ENCODE measurements at regions of chr19 and their contacts with region 1.

Region 1: DNA sequence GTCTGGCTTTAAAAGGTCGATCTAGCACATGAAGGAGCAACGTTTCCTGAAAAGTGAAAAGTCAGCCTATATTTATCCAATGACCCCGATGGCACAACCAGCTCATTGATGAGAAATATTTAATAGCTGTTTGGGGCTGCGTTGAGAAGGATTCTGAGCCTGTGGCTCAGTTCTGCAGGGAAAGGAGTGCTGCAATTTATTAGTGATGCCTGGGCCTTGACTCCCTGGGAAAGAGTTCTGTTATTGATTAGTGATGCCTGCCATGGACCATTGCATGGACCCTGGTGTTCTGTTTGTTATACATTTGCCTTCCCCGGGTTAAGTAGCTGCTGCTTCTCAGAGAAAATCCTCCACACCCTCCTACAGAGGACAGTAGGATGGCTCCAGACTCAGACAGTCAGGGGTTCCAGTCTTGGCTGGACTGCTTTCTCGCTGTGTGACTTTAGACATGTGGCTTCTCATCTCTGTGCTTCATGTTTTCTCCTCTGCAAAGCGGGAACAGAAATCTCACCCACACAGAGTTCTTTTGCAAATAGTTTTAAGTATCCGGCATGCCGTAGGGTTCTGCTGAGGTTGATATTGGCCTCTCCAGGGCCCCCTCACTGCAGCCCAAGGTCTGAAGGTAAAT is 17.7 kb upstream of the PTPRS start:
- DNase-seq: no peak
- H3K4me3 Mint-ChIP-seq: no peak overlapping the region
- H3K27ac Mint-ChIP-seq: no peak overlapping the region
- H3K4me1 Mint-ChIP-seq: no peaks in the 10 kb centered on the region
- H3K27me3 Mint-ChIP-seq: peaks cover 66% of the 10 kb centered on the region
- CTCF ChIP-seq: no peak

Region 2: DNA sequence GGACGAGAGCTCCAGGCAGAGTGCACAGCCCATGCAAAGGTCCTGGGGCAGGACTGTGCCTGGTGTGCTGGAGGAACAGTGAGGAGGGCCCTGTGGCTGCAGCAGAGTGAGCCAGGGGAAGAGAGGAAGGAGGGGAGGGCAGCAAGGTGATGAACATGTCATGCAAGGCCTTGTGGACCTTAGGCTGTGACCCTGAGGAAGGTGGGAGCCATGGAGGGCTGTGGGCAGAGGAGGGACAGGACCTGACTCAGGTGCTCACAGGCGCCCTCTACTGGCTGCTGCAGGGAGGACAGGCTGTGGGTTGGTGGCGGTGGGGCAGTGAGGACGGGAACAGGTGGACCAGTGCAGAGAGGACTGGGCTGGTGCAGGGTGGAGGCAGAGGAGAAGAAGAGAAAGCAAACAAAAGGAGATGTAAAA is 187.9 kb before region 1 on chr19:
- CTCF ChIA-PET with region 1: interaction called, 10 read pairs
- intact Hi-C with region 1: no loop called
- DNase-seq: peak; percentile 26
- H3K4me3 Mint-ChIP-seq: peak overlapping the region; percentile 4
- H3K27ac Mint-ChIP-seq: peak overlapping the region; percentile 16
- H3K4me1 Mint-ChIP-seq: peaks cover 12% of the 10 kb centered on the region
- H3K27me3 Mint-ChIP-seq: no peaks in the 10 kb centered on the region
- CTCF ChIP-seq: no peak

Region 3: DNA sequence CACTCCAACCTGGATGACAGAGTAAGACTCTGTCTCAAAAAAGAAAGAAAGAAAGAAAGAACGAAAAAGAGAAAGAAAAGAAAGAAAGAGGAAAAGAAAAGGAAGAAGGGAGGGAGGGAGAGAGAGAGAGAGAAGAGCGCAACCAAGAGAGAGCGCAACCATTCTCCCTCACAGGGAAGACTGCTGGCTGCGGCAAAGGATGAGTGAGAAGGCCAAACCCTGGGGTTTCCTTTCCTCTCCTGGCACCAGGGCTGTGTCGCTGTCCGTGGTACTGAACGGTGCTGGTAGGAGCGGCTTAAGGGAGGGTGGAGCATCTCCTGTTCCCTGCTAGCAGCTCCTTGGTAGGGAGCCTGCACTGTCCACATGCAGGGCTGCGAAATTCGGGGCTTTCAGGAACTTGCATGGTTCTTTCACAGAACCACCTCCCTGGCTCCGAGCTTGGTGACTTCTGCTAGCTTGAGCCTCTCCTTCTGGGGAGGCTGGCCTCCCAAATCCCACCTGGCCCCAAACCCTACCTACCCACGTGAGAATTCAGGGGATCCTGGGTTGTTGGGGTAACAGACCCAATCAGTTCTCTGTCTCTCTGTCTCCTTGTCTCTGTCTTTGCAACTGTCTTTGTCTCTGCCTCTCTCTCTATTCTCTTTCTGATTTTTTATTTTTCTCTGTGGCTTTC is 45.8 kb after region 1 on chr19:
- CTCF ChIA-PET with region 1: no interaction called
- intact Hi-C with region 1: no loop called
- DNase-seq: peak; percentile 82
- H3K4me3 Mint-ChIP-seq: no peak overlapping the region
- H3K27ac Mint-ChIP-seq: no peak overlapping the region
- H3K4me1 Mint-ChIP-seq: no peaks in the 10 kb centered on the region
- H3K27me3 Mint-ChIP-seq: peaks cover 60% of the 10 kb centered on the region
- CTCF ChIP-seq: no peak

Region 4: DNA sequence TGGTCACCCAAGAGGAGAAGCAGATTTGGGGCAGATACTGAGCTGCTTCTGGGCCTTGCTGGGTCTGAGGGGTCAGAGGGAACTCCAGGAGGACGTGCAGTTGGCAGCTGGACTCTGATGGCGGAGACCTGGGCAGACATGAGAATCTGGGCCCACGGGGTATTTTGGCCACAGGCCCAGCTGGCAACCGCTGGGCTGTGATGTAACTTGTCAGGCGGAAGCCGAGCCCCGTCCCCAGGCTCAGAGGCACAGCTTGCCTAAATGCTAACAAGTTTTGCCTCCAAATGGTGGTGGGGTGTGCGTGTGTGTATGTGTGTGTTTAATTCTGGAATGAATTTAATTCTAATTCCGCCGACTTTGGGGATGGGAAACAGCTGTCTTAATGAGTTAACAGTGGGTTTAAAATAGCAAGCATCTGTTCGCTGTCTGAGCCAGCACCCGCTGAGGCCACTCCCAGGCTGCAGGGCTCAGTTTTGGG is 108.6 kb after region 1 on chr19:
- CTCF ChIA-PET with region 1: no interaction called
- intact Hi-C with region 1: no loop called
- DNase-seq: no peak
- H3K4me3 Mint-ChIP-seq: no peak overlapping the region
- H3K27ac Mint-ChIP-seq: no peak overlapping the region
- H3K4me1 Mint-ChIP-seq: no peaks in the 10 kb centered on the region
- H3K27me3 Mint-ChIP-seq: peaks cover 54% of the 10 kb centered on the region
- CTCF ChIP-seq: no peak